Lower leg skin (tissue), 4 donors: ENCODE measurements at regions of chr12 and their contacts with region 1.

Region 1: DNA sequence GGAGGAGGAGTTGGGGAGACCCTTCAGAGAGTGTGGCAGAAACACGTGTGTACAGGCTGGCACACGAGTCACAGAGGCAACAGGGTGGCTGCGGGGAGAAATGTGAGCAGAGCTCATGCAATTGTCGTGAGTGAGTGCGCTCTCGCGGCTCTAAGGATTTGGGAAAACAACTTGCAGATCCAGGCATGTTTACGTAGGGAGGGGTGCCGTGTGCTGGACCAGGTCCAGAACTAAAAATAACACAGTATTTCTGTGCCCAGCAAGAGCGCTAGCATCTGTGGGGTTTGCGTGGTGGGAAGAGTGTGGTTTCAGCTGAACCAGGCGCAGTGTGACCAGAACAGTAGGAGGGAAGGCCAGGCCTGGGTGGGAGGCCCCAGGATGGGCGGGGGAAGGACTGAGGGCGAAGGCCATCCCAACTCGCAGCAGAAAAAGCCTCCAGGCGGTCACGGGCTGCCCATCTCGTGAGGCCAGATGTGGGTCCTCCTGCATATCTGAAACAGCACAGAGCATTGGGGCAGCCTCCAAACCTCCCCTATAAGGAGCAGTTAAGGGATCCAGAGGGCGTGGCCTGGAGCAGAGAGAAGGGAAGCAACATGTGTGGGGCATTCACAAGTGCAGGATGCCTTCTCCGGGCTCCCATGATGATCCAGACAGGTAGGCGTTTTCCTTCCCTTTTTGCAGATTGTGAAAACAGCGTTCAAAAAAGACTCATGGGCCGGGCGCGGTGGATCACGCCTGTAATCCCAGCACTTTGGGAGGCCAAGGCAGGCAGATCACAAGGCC is 17.9 kb upstream of the CD9 start:
- DNase-seq: peak; percentile 69 to 96
- H3K4me3 ChIP-seq: no peak overlapping the region
- CTCF ChIP-seq: no peak
- POLR2A ChIP-seq: no peak

Region 2: GRCh38 chr12:5927732-5928516 is 254.4 kb before region 1 on chr12:
- intact Hi-C with region 1: no loop called
- DNase-seq: peak in 1 of 2 donors; percentile 64
- H3K4me3 ChIP-seq: no peak overlapping the region
- CTCF ChIP-seq: no peak
- POLR2A ChIP-seq: no peak

Region 3: GRCh38 chr12:6062757-6063735 is 119.3 kb before region 1 on chr12:
- intact Hi-C with region 1: loop called (anchors 10 kb)
- DNase-seq: no peak
- H3K4me3 ChIP-seq: no peak overlapping the region
- CTCF ChIP-seq: peak in 1 of 3 donors; percentile 92
- POLR2A ChIP-seq: no peak

Region 4: DNA sequence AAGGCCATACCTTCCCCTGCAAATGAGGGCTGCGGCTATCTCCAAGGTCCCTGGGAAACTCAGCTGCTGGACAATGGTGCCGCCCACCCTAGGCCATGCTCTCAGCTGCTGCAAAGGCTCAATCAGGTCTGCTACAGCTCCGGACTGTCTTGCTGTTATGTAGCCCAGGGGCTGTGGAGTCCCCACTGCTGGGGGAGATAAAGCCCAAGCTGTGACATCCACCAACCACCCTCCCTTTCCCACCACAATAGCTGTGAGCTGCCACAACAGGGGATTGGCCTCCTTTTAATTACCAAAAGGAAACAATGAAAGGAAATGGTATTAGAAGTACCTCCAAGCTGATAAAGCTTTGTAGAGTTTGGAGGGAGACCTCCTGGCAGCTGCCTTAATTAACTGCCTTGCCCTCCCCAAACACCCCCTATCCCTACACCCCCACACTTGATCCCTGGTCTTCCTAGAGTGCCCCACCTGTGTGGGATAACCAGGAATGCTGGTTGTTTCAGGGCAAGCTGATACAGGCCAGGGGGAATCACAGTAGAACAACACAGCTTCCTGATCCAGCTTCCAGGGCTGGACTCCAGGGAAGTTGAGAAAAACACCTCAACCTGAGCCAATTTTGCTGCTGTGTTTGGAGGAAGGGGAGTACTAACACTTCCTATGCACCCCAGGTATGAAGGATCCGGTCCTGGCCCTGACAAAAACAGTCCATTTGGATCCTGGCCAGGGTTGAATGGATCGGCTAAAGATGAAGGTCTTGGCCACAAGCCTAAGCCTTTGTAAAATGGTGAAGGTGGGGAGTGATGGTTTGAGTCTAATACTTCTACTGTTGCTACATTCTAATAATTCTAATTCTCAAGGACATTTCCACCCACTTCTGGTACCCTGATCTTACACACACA is 57.6 kb before region 1 on chr12 and contains the start of gene VWF:
- intact Hi-C with region 1: no loop called
- DNase-seq: peak in 1 of 2 donors; percentile 75
- H3K4me3 ChIP-seq: no peak within 1 kb of the TSS
- CTCF ChIP-seq: no peak
- POLR2A ChIP-seq: no peak
- total RNA-seq, gene VWF: 34.3 to 107 (median 50.3) TPM

Region 5: DNA sequence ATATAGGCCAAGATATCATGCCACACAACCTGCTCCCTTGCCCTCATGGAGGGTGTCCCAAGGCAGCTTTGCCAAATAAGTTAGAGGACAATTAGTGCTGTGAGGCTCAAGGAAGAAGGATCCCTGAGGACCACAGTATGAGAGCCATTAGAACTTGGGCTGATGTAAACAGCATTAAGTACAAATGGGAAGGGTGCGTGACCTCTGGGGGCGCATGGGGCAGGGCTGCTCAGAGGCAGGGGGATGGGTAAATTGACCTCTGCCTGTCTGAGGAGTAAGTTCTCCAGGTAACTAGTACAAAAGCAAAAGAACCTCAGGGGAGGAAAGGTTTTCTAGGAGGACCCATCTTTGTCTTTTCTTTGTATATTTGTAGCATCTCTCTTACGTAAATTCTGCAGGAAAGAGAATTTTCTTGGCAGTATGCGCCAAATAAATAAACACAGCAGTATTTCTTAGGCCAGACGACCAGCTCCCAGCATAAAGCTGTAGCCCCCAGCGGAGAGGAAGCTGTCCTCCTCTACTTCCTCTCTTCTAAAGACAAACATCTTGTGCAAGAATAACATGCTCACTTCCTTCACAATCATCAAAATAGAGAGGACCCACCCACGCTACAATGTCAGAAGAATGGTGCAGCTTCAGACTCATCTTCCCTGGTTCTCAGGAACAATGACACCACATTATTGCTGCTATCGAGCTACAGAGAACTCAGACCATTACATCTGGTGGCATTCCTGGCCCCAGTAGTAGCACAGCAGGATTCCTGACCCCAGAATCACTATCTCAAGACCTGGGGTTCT is 41.5 kb before region 1 on chr12:
- intact Hi-C with region 1: no loop called
- DNase-seq: peak; percentile 44 to 73
- H3K4me3 ChIP-seq: no peak overlapping the region
- CTCF ChIP-seq: no peak
- POLR2A ChIP-seq: no peak